Endothelial cell of umbilical vein (primary cell): ENCODE measurements at regions of chr16 and their contacts with region 1.

Region 1: DNA sequence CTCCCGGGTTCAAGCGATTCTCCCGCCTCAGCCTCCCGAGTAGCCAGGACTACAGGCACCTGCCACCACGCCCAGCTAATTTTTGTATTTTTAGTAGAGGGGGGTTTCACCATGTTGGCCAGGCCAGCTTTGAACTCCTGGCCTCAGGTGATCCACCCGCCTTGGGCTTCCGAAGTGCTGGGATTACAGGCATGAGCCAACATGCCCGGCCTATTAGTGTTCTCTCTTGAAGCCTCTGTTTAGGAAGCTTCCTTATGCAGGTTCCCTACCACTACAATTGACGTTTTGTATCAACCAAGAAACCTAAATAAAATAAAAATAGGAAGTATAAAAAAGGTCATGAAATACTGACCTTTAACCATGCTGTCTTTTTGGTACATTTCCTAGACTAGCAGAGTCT is 16.0 kb downstream of the CHST5 start:
- DNase-seq: no peak
- H3K4me3 ChIP-seq: no peak overlapping the region
- H3K27ac ChIP-seq: no peak overlapping the region
- H3K4me1 ChIP-seq: peaks cover 5% of the 10 kb centered on the region
- H3K27me3 ChIP-seq: no peaks in the 10 kb centered on the region
- CTCF ChIP-seq: no peak
- POLR2A ChIP-seq: no peak

Region 2: GRCh38 chr16:75432828-75433731 is 86.8 kb before region 1 on chr16 and contains the start of gene CFDP1:
- CTCF ChIA-PET with region 1: interaction called, 11 read pairs
- POLR2A ChIA-PET with region 1: interaction called, 3 read pairs
- dilution Hi-C with region 1: no loop called
- intact Hi-C with region 1: no loop called
- DNase-seq: peak; percentile 94
- H3K4me3 ChIP-seq: peak within 1 kb of the TSS; percentile 37 to 81 (median 72)
- H3K27ac ChIP-seq: peak within 1 kb of the TSS; percentile 91
- H3K4me1 ChIP-seq: peaks cover 10% of the 10 kb centered on the region
- H3K27me3 ChIP-seq: no peaks in the 10 kb centered on the region
- CTCF ChIP-seq: no peak
- POLR2A ChIP-seq: peak; percentile 73
- total RNA-seq, gene CFDP1: 49.6 and 53.8 TPM in 2 replicates

Region 3: DNA sequence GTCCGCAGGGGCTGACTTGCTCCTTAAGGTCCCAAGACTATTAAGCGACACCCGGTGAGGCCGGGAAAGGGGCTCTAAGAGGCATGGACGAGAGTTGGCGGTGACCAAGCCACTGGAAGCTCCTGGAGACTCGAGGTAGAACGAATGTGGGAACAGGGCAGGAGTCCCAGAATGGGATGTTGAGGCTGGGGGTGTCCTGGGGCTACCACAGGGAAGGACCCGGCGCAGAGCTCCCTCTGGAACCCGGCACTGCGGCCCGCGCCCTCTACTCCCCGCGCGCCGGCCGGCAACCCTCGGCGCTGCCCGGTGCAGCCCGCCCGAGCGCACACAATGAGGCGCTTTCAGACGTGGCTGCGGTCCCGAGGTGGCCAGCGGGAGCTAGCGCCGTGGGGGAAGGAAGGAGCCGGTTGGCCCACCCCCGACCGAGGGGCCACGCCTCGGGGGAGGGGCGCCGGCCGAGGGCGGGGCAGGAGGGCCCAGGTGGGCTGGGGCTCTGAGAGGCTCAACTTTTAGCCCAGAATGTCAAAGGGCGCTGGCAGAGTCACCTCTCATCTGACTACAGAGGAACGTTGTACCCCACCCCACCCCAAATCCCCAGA is 24.7 kb before region 1 on chr16 and contains the start of gene CHST6:
- CTCF ChIA-PET with region 1: interaction called, 14 read pairs
- POLR2A ChIA-PET with region 1: interaction called, 13 read pairs
- dilution Hi-C with region 1: no loop called
- intact Hi-C with region 1: loop called (anchors 1 kb)
- DNase-seq: peak; percentile 27
- H3K4me3 ChIP-seq: peak within 1 kb of the TSS; percentile 11 to 64 (median 37)
- H3K27ac ChIP-seq: no peak within 1 kb of the TSS
- H3K4me1 ChIP-seq: peaks cover 7% of the 10 kb centered on the region
- H3K27me3 ChIP-seq: peaks cover 5 to 8% of the 10 kb centered on the region in 2 experiments
- CTCF ChIP-seq: no peak
- POLR2A ChIP-seq: no peak
- total RNA-seq, gene CHST6: 0.60 and 0.81 TPM in 2 replicates

Region 4: DNA sequence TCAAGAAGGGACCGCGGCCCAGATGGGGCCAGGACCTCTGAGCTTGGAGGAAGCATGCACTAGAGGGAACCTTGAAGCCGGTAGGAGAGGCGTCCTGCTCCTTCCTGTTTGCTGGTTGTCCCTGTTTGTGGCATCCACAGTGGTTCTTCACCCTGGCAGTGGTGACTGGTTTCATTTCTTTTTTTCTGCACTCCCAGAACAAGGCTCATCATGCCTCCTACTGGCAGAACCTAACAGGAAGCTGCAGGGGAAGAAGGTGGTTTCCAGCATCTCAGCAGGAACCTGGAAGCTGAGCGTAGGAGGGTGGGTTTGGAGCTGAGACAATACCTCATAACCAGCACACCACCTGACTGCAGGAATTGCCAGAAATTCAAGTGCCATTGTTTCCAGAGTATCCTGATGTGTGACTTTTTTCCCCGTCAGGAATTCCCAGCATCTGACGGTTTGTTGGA is 30.4 kb after region 1 on chr16:
- CTCF ChIA-PET with region 1: interaction called, 15 read pairs
- POLR2A ChIA-PET with region 1: interaction called, 3 read pairs
- dilution Hi-C with region 1: no loop called
- intact Hi-C with region 1: loop called (anchors 1 kb)
- DNase-seq: peak; percentile 52
- H3K4me3 ChIP-seq: no peak overlapping the region
- H3K27ac ChIP-seq: no peak overlapping the region
- H3K4me1 ChIP-seq: peaks cover 12% of the 10 kb centered on the region
- H3K27me3 ChIP-seq: no peaks in the 10 kb centered on the region
- CTCF ChIP-seq: peak; percentile 47 to 48
- POLR2A ChIP-seq: no peak

Region 5: DNA sequence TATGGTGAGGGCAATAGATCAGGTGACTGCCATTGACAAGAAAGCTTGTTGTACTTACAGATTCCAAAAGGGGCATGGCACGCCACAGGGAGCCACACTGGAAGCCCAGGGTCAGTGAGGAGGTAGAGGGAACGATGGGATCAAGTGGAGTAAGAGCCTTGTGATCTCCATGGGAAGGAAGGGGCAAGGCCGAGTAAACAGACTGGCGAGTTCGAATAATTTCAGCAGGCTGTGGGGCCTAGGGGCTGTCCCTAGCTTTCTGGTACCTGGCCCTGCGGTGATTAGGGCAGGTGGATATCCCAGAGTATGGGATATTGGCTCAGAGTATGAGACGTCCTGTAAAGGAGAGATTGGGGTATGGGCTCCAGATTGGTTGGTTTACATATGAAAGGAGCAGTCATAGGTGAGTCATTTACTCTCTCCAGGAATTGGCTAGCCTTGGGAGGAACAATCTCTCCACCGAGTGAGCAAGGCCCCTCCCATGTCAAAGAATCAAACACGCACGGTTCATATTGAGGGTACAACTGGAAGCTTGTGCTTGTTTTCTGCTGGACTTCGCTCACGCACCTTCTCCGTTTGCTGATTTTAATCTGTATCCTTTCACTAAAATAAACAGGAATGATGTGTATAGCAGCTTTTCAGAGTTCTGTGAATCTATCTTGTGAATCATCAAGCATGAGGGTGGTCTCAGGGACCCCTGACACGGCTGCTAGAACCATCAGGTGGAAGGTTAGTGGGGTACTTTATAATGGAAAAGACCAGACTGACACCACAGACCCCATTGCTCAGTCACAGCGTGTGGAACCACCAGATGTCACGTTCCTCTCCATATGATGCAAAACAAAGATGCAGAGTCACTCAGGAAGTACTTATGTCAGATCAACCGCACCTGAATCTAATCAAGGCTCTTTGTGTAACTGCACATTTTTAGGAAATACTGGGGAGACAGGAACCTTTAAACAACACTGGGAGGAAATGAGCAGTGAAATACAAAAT is 74.2 kb after region 1 on chr16:
- CTCF ChIA-PET with region 1: interaction called, 6 read pairs
- POLR2A ChIA-PET with region 1: no interaction called
- dilution Hi-C with region 1: no loop called
- intact Hi-C with region 1: loop called (anchors 1 kb)
- DNase-seq: peak; percentile 48
- H3K4me3 ChIP-seq: no peak overlapping the region
- H3K27ac ChIP-seq: peak overlapping the region; percentile 93
- H3K4me1 ChIP-seq: peaks cover 16% of the 10 kb centered on the region
- H3K27me3 ChIP-seq: no peaks in the 10 kb centered on the region
- CTCF ChIP-seq: no peak
- POLR2A ChIP-seq: no peak

Region 6: DNA sequence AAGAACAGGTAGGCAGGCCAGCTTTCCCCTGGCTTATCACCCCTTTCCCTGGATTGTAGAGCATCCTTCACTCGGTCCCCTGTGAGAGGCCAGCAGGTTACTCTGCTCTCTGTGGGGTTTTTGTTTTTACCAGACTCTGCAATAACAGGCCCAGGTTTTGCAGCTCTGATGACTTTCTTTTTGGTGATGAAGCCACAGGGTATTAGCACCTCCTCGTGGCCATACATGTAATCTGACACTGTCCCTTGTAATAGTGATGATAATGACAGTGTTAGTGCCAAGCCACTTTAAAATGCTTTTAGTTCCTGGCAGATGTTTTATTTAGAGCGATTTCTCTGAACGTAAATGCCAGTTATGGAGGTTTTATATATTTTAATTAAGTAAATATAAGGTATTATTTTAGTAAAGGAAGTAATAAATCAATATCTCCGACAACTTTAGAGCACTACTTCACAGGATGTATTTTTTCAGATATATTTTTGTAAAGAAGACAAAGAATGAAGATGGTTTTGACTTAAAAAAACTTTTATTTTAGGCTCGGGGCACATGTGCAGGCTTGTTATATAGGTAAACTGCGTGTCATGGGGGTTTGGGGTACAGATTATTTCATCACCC is 244.4 kb after region 1 on chr16:
- CTCF ChIA-PET with region 1: interaction called, 5 read pairs
- POLR2A ChIA-PET with region 1: no interaction called
- dilution Hi-C with region 1: no loop called
- intact Hi-C with region 1: loop called (anchors 1 kb)
- DNase-seq: peak; percentile 64
- H3K4me3 ChIP-seq: no peak overlapping the region
- H3K27ac ChIP-seq: no peak overlapping the region
- H3K4me1 ChIP-seq: no peaks in the 10 kb centered on the region
- H3K27me3 ChIP-seq: peaks cover 0 to 4% of the 10 kb centered on the region in 2 experiments
- CTCF ChIP-seq: peak; percentile 60 to 68
- POLR2A ChIP-seq: no peak